Head of caudate nucleus (tissue), 42 donors: ENCODE measurements at regions of chr4 and their contacts with region 1.

Region 1: DNA sequence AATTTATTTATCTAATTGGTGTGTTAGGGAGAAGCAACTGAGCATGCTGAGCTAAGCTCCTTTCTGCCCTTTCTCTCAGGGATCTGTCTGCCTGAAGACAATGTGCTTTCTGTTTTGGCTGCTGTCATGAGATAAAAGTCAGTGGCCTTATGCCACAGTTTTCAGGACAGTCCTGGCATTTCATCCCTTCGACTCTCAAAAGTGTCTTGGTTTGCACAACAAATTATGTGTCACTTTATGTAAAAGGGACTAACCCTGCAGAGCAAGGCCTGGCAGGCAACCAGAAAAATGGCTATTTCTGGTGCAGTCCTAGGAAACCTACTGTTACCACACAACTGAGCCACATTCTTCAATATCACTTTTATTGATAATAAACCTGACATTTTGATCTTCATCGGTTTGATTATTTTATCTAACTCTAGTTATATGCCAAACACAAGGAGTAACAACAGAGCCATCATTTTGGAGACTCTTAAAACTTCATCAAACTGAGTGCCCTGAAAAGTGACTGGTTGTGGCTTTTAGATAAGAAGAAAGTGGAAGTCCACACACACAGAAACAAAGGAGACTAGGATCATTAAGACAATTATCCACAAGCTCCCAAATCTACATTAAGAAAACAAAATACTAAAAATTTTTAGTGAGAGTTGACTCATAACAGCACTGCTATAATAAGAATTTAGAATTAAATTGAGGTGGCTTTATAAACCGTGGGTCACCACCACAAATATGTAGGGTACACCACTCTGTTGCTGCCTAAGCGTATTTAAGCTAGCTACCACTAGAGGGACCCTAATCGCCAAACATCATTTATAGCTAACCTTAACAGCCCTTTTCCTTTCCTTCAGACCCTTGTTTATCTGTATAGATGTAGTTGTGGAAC is 95.9 kb upstream of the PTPN13 start:
- DNase-seq: peak in 24 of 42 donors; percentile 10 to 71 (median 32)

Region 2: DNA sequence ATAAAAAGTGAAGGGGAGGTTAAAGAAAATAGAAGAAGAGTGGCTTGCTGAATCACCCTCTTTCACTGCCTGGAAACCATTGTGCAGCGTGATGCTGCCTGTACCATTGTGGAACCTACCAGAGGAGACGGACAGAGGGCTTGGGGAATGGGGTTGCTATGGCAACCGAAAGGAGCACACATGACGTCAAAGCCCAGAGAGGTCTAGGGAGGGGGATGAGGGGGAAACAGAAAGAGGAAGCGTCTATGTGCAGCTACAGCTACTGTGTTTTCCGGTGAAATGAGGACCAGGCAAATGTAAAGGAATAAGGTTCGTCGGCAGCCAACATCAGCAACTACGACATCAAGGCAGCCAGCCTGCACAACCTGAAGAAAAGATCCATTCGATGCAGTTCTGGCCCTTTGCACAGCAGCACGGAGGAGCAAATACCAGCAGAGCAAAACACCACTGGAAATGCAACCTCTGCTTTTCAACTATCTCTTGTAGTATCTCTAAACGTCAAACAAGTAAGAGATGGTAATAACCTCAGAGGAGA is 138.2 kb before region 1 on chr4 and contains the start of gene MAPK10:
- intact Hi-C with region 1: loop called (anchors 10 kb)
- DNase-seq: peak; percentile 79 to 98 (median 91)

Region 3: DNA sequence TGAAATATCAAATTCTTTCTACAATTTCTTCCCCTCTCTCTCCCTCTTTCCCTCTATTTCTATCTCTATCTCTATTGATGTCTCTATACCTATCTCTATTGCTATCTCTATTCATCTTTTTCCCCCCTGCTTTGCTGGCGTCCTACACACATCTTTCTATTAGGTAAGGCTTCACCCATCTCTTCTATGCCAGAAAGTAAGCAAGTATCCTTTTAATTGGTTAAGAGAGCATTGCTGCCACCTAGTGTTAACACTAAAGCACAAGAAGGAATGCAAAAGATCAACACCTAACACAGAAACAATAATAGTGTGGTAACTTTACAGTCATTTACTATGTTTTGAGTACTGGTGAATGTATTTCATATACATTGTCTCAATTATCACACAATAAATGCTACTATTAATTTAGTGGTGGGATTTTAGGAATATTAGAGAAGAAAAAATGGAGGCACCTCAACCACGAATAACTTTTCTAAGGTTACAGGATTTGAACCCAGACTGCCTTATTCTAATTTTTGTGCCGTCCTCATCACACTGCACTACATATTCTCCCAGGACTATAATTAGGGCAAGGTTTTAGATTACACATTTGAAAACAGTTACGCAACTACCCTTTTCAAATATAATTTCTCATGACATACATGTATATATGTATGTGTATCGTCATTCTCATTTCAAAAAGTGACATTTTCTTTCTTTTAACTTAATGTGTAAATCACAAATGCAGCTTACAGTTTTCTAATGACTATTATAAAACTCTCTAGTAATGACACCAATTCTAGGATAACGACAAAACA is 397.7 kb after region 1 on chr4:
- intact Hi-C with region 1: loop called (anchors 5 kb)
- DNase-seq: peak in 12 of 42 donors; percentile 15 to 79 (median 51)